Astrocyte of the cerebellum (primary cell): ENCODE measurements at regions of chr7 and their contacts with region 1.

Region 1: GRCh38 chr7:142104550-142105527 is 6.7 kb upstream of the MGAM2 start:
- DNase-seq: no peak
- H3K4me3 ChIP-seq: no peak overlapping the region
- CTCF ChIP-seq: no peak

Region 2: DNA sequence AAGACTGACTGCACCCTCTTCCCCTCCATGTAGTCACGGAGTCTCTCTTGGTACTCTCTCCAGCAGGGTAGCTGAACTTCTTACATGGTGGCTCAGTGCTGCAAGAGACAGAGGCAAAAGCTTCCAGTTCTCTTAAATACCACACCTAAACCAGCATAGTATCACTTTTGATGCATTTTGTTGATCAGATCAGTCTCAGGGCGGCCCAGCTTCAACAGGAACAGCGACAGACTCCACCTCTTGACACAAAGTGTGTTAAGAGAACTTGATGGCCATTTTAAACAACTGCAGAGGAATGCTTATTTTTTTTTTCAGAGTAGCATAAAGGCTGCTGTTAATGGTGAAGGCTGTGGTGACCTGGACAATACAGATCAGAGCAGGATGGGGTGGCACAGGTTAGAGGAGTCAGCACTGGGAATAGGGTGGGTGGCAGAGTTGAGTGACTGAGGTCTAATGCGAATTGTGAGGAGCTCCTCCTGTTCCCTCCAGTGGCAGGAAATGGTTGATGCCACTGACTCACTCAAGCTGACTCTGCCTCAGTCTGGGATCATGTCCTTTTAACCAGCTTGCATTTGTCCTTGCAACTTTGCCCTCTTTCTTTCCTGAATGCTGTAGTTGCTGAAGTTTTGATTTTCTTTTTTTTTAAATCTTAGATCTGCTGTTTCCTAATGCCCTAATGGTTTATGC is 91.9 kb before region 1 on chr7:
- in situ Hi-C with region 1: loop called (anchors 5 kb)
- DNase-seq: no peak
- H3K4me3 ChIP-seq: no peak overlapping the region
- CTCF ChIP-seq: no peak

Region 3: DNA sequence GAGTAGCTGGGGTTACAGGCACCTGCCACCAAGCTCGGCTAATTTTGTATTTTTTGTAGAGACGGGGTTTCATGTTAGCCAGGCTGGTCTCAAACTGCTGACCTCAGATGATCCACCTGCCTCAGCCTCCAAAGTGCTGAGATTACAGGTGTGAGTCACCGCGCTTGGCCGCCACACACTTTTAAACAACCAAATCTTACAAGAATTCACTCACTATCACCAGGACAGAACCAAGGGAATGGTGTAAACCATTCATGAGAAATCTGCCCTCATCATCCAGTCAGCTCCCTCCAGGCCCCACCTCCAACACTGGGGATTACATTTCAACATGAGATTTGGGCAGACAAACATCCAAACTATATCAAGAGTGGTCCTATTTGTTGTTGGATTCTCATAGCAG is 65.6 kb before region 1 on chr7:
- in situ Hi-C with region 1: no loop called
- DNase-seq: no peak
- H3K4me3 ChIP-seq: no peak overlapping the region
- CTCF ChIP-seq: no peak

Region 4: GRCh38 chr7:142168745-142169144 is 63.9 kb after region 1 on chr7:
- in situ Hi-C with region 1: loop called (anchors 10 kb)
- DNase-seq: no peak
- H3K4me3 ChIP-seq: no peak overlapping the region
- CTCF ChIP-seq: no peak